GM12878 (cell line): ENCODE measurements at regions of chr14 and their contacts with region 1.

Region 1: GRCh38 chr14:90903101-90903500 is 86.9 kb upstream of the TTC7B start:
- DNase-seq: peak; percentile 17
- ATAC-seq: peak; percentile 85
- H3K4me3 ChIP-seq: no peak overlapping the region
- H3K27ac ChIP-seq: no peak overlapping the region
- H3K4me1 ChIP-seq: peaks cover 8% of the 10 kb centered on the region; the same call in 1 of the 2 replicates
- H3K27me3 ChIP-seq: no peaks in the 10 kb centered on the region
- CTCF ChIP-seq: peak; percentile 64 to 78 (median 73)
- EP300 ChIP-seq: no peak
- POLR2A ChIP-seq: no peak
- RAD21 ChIP-seq: peak; percentile 91

Region 2: DNA sequence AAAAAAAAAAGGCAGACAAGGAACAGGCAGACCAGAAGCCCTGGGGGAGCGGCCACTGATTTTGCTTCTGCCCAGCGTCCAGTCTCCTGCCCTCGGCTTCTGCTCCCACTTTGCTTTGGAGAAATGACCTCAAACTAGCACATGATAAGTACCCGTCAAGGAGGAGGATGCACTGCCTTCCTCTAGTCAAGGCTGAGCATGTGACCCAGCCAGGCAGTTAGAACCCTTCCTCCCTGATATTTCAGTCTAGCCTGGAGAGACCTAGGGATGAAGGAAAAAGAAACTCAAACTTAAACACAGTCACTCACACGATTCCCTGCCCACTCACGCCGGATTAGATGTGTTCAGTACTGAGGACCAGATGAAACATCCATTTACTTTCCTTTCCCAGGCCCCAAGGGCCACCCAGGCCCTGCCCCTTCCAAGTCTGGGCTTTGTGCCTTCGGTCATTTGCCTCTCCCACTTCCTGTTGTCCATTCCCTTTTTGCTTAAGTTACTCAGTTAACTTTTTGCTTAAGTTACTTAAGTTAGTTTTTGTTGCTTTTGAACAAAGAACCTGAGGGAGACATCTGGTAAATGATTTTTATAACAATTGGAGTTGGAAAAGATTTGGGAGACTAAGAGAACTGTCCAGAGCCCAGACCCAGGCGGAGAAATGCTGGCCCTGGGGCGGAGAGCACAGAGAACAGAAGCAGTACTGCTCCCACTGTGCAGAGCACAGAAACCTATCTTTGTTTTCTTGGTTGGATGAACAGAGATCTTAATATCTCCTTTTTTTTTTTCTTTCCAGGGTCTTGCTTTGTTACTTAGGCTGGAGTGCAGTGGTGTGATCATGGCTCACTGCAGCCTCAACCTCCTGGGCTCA is 63.8 kb before region 1 on chr14:
- CTCF ChIA-PET with region 1: no interaction called
- POLR2A ChIA-PET with region 1: no interaction called
- RAD21 ChIA-PET with region 1: no interaction called
- SMC1A ChIA-PET with region 1: no interaction called
- in situ Hi-C with region 1: no loop called
- intact Hi-C with region 1: no loop called
- DNase-seq: no peak
- ATAC-seq: no peak; the same call in 2 of the 3 replicates
- H3K4me3 ChIP-seq: no peak overlapping the region
- H3K27ac ChIP-seq: no peak overlapping the region
- H3K4me1 ChIP-seq: no peaks in the 10 kb centered on the region
- H3K27me3 ChIP-seq: no peaks in the 10 kb centered on the region
- CTCF ChIP-seq: no peak
- EP300 ChIP-seq: no peak
- POLR2A ChIP-seq: no peak
- RAD21 ChIP-seq: no peak

Region 3: DNA sequence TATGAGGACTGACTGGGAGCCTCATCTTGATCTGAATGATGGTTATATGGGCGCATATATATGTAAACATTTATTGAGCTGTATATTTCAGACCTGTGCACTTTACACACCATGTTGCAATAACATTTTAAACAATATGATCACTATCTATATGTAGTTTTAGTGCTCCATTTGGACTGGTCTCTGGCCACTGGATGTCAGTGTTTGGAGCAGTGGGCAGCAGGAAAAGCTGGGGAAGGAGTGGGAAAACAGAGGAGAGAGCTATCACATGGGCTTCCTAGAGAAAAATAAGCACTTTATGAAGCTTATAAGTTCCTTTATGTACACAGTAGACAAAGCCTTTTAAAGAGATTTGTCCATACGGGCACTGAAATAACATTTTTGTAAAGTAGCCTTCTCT is 37.6 kb before region 1 on chr14:
- CTCF ChIA-PET with region 1: interaction called, 13 read pairs
- POLR2A ChIA-PET with region 1: no interaction called
- RAD21 ChIA-PET with region 1: no interaction called
- SMC1A ChIA-PET with region 1: no interaction called
- in situ Hi-C with region 1: no loop called
- intact Hi-C with region 1: no loop called
- DNase-seq: no peak
- ATAC-seq: no peak
- H3K4me3 ChIP-seq: no peak overlapping the region
- H3K27ac ChIP-seq: no peak overlapping the region
- H3K4me1 ChIP-seq: no peaks in the 10 kb centered on the region
- H3K27me3 ChIP-seq: no peaks in the 10 kb centered on the region
- CTCF ChIP-seq: no peak
- EP300 ChIP-seq: no peak
- POLR2A ChIP-seq: no peak
- RAD21 ChIP-seq: no peak

Region 4: GRCh38 chr14:91009501-91010152 is 106.5 kb after region 1 on chr14:
- CTCF ChIA-PET with region 1: interaction called, 13 read pairs
- POLR2A ChIA-PET with region 1: no interaction called
- RAD21 ChIA-PET with region 1: interaction called, 4 read pairs
- SMC1A ChIA-PET with region 1: interaction called, 6 read pairs
- in situ Hi-C with region 1: no loop called
- intact Hi-C with region 1: no loop called
- DNase-seq: peak; percentile 85
- ATAC-seq: peak; percentile 92
- H3K4me3 ChIP-seq: peak overlapping the region; percentile 37
- H3K27ac ChIP-seq: peak overlapping the region; percentile 78
- H3K4me1 ChIP-seq: peaks cover 30% of the 10 kb centered on the region
- H3K27me3 ChIP-seq: no peaks in the 10 kb centered on the region
- CTCF ChIP-seq: no peak
- EP300 ChIP-seq: peak; percentile 23 to 32; a peak in 1 of 4 replicates
- POLR2A ChIP-seq: no peak
- RAD21 ChIP-seq: peak; percentile 2; the same call in 1 of the 2 replicates

Region 5: GRCh38 chr14:91114079-91115065 is 211.3 kb after region 1 on chr14:
- CTCF ChIA-PET with region 1: interaction called, 28 read pairs
- POLR2A ChIA-PET with region 1: no interaction called
- RAD21 ChIA-PET with region 1: interaction called, 40 read pairs
- SMC1A ChIA-PET with region 1: interaction called, 22 read pairs
- in situ Hi-C with region 1: no loop called
- intact Hi-C with region 1: no loop called
- DNase-seq: peak; percentile 86
- ATAC-seq: peak; percentile 88
- H3K4me3 ChIP-seq: peak overlapping the region; percentile 100
- H3K27ac ChIP-seq: peak overlapping the region; percentile 98
- H3K4me1 ChIP-seq: peaks cover 20% of the 10 kb centered on the region
- H3K27me3 ChIP-seq: no peaks in the 10 kb centered on the region
- CTCF ChIP-seq: no peak
- EP300 ChIP-seq: 0 out of 4 replicates have a peak, but pooled peaks of 1 of the 2 experiments have one; percentile 9
- POLR2A ChIP-seq: peak; percentile 82
- RAD21 ChIP-seq: 0 out of 2 replicates have a peak, but pooled peaks have one; percentile 2

Region 6: GRCh38 chr14:91138511-91139359 is 235.6 kb after region 1 on chr14:
- CTCF ChIA-PET with region 1: interaction called, 25 read pairs
- POLR2A ChIA-PET with region 1: no interaction called
- RAD21 ChIA-PET with region 1: interaction called, 13 read pairs
- SMC1A ChIA-PET with region 1: interaction called, 17 read pairs
- in situ Hi-C with region 1: no loop called
- intact Hi-C with region 1: no loop called
- DNase-seq: no peak
- ATAC-seq: peak; percentile 70
- H3K4me3 ChIP-seq: no peak overlapping the region
- H3K27ac ChIP-seq: no peak overlapping the region
- H3K4me1 ChIP-seq: peaks cover 14% of the 10 kb centered on the region
- H3K27me3 ChIP-seq: no peaks in the 10 kb centered on the region
- CTCF ChIP-seq: peak; percentile 47 to 61 (median 49)
- EP300 ChIP-seq: no peak
- POLR2A ChIP-seq: no peak
- RAD21 ChIP-seq: peak; percentile 53